Activated CD4-positive, alpha-beta T cell treated with anti-CD3 and anti-CD28 coated beads for 36 hours (primary cell): ENCODE measurements at regions of chr11 and their contacts with region 1.

Region 1: DNA sequence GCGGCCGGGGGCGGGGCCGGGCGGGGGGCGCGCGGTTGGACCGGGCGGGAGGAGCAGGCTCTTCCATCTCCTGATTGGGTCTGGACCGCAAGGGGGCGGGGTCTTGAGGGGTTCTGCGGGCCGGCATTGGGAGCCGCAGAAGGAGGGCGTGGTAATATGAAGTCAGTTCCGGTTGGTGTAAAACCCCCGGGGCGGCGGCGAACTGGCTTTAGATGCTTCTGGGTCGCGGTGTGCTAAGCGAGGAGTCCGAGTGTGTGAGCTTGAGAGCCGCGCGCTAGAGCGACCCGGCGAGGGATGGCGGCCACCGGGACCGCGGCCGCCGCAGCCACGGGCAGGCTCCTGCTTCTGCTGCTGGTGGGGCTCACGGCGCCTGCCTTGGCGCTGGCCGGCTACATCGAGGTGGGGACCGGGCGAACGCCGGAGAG is at the start of gene APLP2:
- DNase-seq: peak; percentile 99
- ATAC-seq: peak; percentile 96
- H3K4me3 Mint-ChIP-seq: peak within 1 kb of the TSS; percentile 84
- H3K27ac Mint-ChIP-seq: peak within 1 kb of the TSS; percentile 91
- H3K4me1 Mint-ChIP-seq: peaks cover 22% of the 10 kb centered on the region
- H3K27me3 Mint-ChIP-seq: peaks cover 6% of the 10 kb centered on the region
- total RNA-seq, gene APLP2: 34.6 to 40.2 TPM

Region 2: GRCh38 chr11:129922674-129923073 is 147.0 kb before region 1 on chr11:
- CTCF ChIA-PET with region 1: interaction called, 5 read pairs
- POLR2A ChIA-PET with region 1: no interaction called
- intact Hi-C with region 1: loop called in 1 of 2 experiments (anchors 1 kb)
- DNase-seq: no peak
- ATAC-seq: no peak
- H3K4me3 Mint-ChIP-seq: no peak overlapping the region
- H3K27ac Mint-ChIP-seq: no peak overlapping the region
- H3K4me1 Mint-ChIP-seq: peaks cover 6% of the 10 kb centered on the region
- H3K27me3 Mint-ChIP-seq: no peaks in the 10 kb centered on the region

Region 3: GRCh38 chr11:130118636-130119387 is 49.1 kb after region 1 on chr11:
- CTCF ChIA-PET with region 1: interaction called, 3 read pairs
- POLR2A ChIA-PET with region 1: no interaction called
- intact Hi-C with region 1: loop called (anchors 2 kb)
- DNase-seq: peak; percentile 45
- ATAC-seq: peak; percentile 42
- H3K4me3 Mint-ChIP-seq: no peak overlapping the region
- H3K27ac Mint-ChIP-seq: no peak overlapping the region
- H3K4me1 Mint-ChIP-seq: peaks cover 46% of the 10 kb centered on the region
- H3K27me3 Mint-ChIP-seq: peaks cover 4% of the 10 kb centered on the region

Region 4: DNA sequence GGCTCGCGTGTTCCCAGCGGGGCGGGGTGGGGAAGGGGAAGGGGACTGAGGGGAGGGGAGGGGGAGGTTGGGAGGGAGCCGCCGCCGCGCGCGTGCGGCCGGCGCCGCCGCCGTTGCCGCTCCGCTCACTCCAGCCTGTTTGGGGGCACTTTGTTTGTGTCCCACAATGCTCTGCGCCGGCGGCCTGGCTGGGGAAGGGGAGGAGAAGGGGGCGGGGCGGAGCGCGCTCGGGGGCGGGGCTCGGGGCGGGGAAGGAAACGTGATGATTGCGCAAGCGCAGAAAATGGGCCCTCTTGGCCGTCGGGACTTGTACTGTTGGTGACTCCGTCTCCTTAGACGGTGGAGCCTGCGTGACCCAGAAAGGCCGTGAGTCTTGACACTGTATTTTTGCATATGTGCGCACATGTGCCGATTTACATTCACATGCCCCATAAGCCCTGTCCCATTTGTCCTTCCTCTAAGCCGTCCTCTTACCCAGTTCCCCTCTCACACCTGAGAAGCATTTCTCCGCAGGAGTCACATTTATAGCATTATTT is 245.1 kb after region 1 on chr11 and contains the start of gene ZBTB44:
- CTCF ChIA-PET with region 1: no interaction called
- POLR2A ChIA-PET with region 1: no interaction called
- intact Hi-C with region 1: loop called in 1 of 2 experiments (anchors 1 kb)
- DNase-seq: peak; percentile 96
- ATAC-seq: peak; percentile 78
- H3K4me3 Mint-ChIP-seq: peak within 1 kb of the TSS; percentile 83
- H3K27ac Mint-ChIP-seq: peak within 1 kb of the TSS; percentile 95
- H3K4me1 Mint-ChIP-seq: peaks cover 36% of the 10 kb centered on the region
- H3K27me3 Mint-ChIP-seq: no peaks in the 10 kb centered on the region
- total RNA-seq, gene ZBTB44: 38.2 to 49.4 TPM